ENCODE measurements at regions of chr18 and their contacts with region 1.

Region 1: GRCh38 chr18:30532379-30532778 is 510.2 kb downstream of the DSC3 start:
- DNase-seq: no peak
- ATAC-seq: no peak
- H3K4me3 ChIP-seq: no peak overlapping the region
- H3K27ac ChIP-seq: no peak overlapping the region
- H3K4me1 ChIP-seq: no peaks in the 10 kb centered on the region
- H3K27me3 ChIP-seq: no peaks in the 10 kb centered on the region; a peak in 1 of 4 replicates
- CTCF ChIP-seq: no peak
- EP300 ChIP-seq: no peak
- POLR2A ChIP-seq: no peak
- RAD21 ChIP-seq: no peak

Region 2: DNA sequence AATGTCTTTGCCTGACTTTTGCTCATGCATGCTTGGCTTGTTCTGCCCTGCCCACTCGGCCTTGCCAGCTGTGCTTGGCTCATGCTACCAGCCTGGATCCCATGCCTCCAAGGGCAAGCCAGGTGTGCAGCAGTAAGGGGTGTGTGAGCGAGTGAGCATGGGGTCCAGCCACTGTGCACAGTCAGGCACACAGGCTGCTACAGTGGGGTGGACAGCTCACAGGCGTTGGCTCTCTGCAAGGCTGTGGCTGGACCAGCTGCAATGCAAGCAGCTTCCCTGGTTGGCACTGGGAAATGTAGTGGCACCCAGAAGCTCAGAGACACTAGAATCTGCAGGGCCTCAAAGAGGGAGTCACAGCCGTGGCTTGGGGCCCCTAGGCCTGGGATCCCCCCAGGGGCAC is 19.5 kb before region 1 on chr18:
- CTCF ChIA-PET with region 1: interaction called, 4 read pairs
- POLR2A ChIA-PET with region 1: interaction called, 3 read pairs
- RAD21 ChIA-PET with region 1: interaction called, 10 read pairs
- SMC1A ChIA-PET with region 1: interaction called, 12 read pairs
- in situ Hi-C with region 1: no loop called
- intact Hi-C with region 1: no loop called
- DNase-seq: no peak
- ATAC-seq: no peak
- H3K4me3 ChIP-seq: no peak overlapping the region
- H3K27ac ChIP-seq: no peak overlapping the region
- H3K4me1 ChIP-seq: no peaks in the 10 kb centered on the region
- H3K27me3 ChIP-seq: no peaks in the 10 kb centered on the region
- CTCF ChIP-seq: no peak
- EP300 ChIP-seq: no peak
- POLR2A ChIP-seq: no peak
- RAD21 ChIP-seq: no peak

Region 3: DNA sequence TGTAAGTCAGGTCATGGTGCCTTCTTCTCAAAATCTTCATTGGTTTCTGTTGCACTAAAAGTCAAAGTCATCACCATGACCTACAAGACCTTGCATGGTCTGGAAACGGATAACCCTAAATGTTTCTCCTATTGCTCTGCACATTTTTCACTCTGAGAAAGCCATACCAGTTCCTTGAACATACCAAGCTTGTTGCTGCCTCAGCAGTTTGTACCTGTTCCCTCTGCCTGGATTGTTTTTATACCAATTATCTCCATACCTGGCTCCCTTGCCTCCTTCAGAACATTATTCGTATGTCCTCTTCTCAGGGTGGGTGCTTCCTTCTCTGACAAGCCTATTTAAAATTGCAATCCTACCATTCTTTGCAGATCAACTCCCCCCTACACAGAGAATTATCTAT is 11.8 kb after region 1 on chr18:
- CTCF ChIA-PET with region 1: interaction called, 3 read pairs
- POLR2A ChIA-PET with region 1: interaction called, 6 read pairs
- RAD21 ChIA-PET with region 1: no interaction called
- SMC1A ChIA-PET with region 1: interaction called, 15 read pairs
- in situ Hi-C with region 1: no loop called
- intact Hi-C with region 1: no loop called
- DNase-seq: no peak
- ATAC-seq: no peak
- H3K4me3 ChIP-seq: no peak overlapping the region
- H3K27ac ChIP-seq: no peak overlapping the region
- H3K4me1 ChIP-seq: no peaks in the 10 kb centered on the region
- H3K27me3 ChIP-seq: no peaks in the 10 kb centered on the region
- CTCF ChIP-seq: no peak
- EP300 ChIP-seq: no peak
- POLR2A ChIP-seq: no peak
- RAD21 ChIP-seq: no peak

Region 4: GRCh38 chr18:30674596-30674995 is 142.2 kb after region 1 on chr18:
- CTCF ChIA-PET with region 1: no interaction called
- POLR2A ChIA-PET with region 1: no interaction called
- RAD21 ChIA-PET with region 1: no interaction called
- SMC1A ChIA-PET with region 1: no interaction called
- in situ Hi-C with region 1: no loop called
- intact Hi-C with region 1: no loop called
- DNase-seq: no peak
- ATAC-seq: no peak
- H3K4me3 ChIP-seq: no peak overlapping the region
- H3K27ac ChIP-seq: no peak overlapping the region
- H3K4me1 ChIP-seq: no peaks in the 10 kb centered on the region
- H3K27me3 ChIP-seq: no peaks in the 10 kb centered on the region
- CTCF ChIP-seq: no peak
- EP300 ChIP-seq: no peak
- POLR2A ChIP-seq: no peak
- RAD21 ChIP-seq: no peak

Measured in GM12878 (cell line).